K562 (cell line): ENCODE measurements at regions of chr19 and their contacts with region 1.

Region 1: DNA sequence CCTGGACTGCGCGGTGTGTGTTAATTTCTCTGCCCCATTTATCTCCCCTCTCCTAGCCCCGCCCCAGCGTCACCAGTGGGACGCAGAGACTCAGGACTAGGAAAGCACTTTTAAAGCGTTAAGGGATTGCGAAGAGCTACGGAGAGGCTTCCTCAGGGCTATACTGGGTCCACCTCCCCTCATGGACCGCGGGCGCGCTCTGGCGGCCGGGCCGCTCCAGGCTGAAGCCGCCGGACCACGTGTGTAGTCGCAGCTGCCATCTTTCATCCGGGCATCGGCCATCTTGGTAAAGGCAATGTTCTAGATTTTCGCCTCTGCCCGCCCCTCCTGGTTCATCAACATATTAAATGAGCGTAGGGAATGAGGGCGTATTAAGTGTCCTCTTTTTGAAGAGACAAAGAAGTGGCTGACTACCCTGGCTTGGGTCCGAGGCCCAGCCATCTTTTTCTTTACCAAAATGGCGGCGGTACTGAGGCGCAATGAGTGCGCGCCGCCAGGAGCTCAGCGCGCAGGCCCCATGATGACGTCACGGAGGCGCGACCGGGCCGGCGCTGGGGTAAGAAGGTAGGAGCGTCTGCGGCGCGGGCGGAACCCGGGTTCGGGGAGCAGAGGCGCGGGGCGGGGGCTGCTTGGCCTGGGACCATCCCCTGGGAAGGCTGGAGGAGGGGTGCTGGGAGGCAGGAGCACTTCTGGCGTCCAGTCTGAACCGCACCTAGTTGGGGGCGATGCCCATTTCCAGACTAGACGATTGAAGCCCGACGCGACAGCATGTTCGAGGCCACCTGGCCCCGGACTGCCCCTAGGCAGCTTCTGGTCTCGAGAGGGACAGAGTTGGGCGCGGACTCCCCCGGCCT is at the start of gene CCDC124:
- DNase-seq: peak; percentile 93 to 96 (median 96)
- ATAC-seq: peak; percentile 99
- H3K4me3 ChIP-seq: peak within 1 kb of the TSS; percentile 89
- H3K27ac ChIP-seq: peak within 1 kb of the TSS; percentile 95
- H3K4me1 ChIP-seq: peaks cover 12 to 18% of the 10 kb centered on the region in 2 experiments; a peak in 4 of 5 replicates
- H3K27me3 ChIP-seq: no peaks in the 10 kb centered on the region
- CTCF ChIP-seq: peak; percentile 95 to 99 (median 98)
- EP300 ChIP-seq: no peak; the same call in none of the 2 replicates
- POLR2A ChIP-seq: peak; percentile 91
- RAD21 ChIP-seq: peak; percentile 98 to 99
- polyA plus RNA-seq, gene CCDC124: 6.6 to 19.4 TPM

Region 2: DNA sequence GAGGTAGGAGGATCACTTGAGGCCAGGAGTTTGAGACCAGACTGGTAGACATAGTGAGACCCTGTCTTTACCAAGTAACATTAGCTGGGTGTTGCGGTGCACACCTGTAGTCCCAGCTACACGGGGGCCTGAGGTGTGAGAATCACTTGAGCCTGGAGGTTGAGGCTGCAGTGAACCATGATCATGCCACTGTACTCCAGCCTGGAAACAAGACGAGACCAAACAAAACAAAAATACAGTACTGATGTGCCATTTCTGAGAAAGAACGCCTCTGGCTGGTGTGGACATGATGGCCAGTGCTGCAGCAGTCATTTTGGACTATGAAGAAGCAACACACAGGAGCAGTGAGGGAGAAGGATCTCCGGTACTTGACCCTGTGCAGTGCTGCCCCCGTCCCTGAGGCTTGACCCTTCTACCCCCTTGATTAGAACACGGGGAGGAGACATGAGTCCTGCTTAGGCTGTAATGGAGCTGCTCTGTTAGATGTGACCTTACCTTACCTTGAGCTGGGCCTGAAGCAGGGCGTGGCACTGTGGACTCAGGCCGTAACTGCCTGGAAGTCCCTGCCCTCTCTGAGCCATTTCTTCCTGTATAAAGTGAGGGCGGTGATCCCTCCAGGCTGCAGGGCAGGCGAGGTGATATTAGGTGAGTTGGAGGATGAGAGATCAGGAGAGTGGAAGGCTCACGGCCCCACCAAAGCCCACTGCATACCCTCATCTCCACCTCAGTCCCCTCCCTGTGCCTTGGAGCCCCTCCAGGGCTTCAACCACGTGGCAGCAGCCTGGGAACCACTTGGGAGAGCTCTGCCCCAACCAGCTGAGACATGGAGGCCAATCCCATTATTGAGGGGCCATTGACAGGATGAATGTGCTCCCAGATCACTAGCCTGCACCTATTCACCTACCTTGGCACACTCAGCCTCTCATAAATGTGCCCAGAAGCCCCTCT is 67.1 kb before region 1 on chr19:
- CTCF ChIA-PET with region 1: interaction called, 31 read pairs
- POLR2A ChIA-PET with region 1: interaction called, 51 read pairs
- in situ Hi-C with region 1: loop called (anchors 5 kb)
- intact Hi-C with region 1: loop called (anchors 1 kb)
- DNase-seq: peak; percentile 37 to 86 (median 58)
- ATAC-seq: peak; percentile 81
- H3K4me3 ChIP-seq: no peak overlapping the region
- H3K27ac ChIP-seq: peak overlapping the region; percentile 55
- H3K4me1 ChIP-seq: peaks cover 18 to 55% of the 10 kb centered on the region in 2 experiments; a peak in 4 of 5 replicates
- H3K27me3 ChIP-seq: no peaks in the 10 kb centered on the region
- CTCF ChIP-seq: no peak
- EP300 ChIP-seq: no peak
- POLR2A ChIP-seq: peak; percentile 72
- RAD21 ChIP-seq: no peak

Region 3: DNA sequence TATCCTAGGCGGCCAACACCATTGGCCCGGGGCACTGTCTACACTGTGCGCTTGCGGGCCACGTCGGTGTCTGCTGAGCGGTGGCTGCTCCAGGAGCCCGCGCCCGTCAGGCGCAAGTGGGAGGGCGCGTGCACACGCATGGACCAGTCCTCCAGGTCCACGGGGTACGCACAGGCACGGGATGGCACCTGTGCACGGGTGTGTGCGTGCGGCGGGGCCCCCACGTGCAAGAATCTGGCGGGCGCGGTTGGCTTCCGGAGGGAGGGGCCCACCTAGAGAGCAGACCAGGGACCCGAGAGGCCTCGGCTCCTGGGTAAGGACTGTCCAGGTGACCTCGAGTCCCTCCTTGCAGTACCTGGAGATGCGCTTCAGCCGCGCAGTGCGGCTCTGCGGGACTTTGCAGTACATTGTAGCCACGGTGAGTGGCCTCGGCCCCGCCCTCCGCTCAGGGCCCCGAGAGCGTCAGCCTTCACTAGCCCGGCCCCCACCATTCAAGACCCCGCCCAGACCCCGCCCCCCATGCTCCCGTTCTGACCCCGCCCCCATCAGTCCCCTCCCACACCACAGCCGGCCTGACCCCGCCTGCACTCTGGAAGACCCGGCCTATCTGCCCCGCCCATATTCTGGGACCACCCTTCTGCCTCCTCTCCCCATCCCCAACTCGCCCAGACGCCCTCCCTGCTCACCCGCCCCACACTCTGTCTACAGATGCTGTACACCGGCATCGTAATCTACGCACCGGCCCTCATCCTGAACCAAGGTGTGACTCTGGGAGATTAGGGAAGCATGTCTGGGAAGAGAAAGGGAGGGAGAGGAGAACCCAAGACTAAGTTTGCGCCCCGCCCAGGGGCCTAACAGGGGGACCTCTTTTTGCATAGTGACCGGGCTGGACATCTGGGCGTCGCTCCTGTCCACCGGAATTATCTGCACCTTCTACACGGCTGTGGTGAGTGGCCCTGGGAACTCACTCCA is 58.6 kb before region 1 on chr19:
- CTCF ChIA-PET with region 1: interaction called, 31 read pairs
- POLR2A ChIA-PET with region 1: interaction called, 20 read pairs
- in situ Hi-C with region 1: loop called (anchors 5 kb)
- intact Hi-C with region 1: loop called (anchors 1 kb)
- DNase-seq: peak; percentile 87 to 98 (median 96)
- ATAC-seq: peak; percentile 96
- H3K4me3 ChIP-seq: peak overlapping the region; percentile 43
- H3K27ac ChIP-seq: no peak overlapping the region
- H3K4me1 ChIP-seq: peaks cover 0 to 42% of the 10 kb centered on the region in 2 experiments; a peak in 3 of 5 replicates
- H3K27me3 ChIP-seq: peaks cover 9 to 17% of the 10 kb centered on the region in 2 experiments; a peak in 3 of 5 replicates
- CTCF ChIP-seq: no peak
- EP300 ChIP-seq: no peak
- POLR2A ChIP-seq: no peak
- RAD21 ChIP-seq: no peak

Region 4: GRCh38 chr19:17947815-17948513 is 15.3 kb after region 1 on chr19:
- CTCF ChIA-PET with region 1: no interaction called
- POLR2A ChIA-PET with region 1: interaction called, 21 read pairs
- in situ Hi-C with region 1: no loop called
- intact Hi-C with region 1: no loop called
- DNase-seq: peak; percentile 96 to 99 (median 96)
- ATAC-seq: peak; percentile 68
- H3K4me3 ChIP-seq: peak overlapping the region; percentile 51
- H3K27ac ChIP-seq: peak overlapping the region; percentile 31; the same call in 1 of the 3 replicates
- H3K4me1 ChIP-seq: peaks cover 58 to 80% of the 10 kb centered on the region in 2 experiments
- H3K27me3 ChIP-seq: no peaks in the 10 kb centered on the region
- CTCF ChIP-seq: no peak
- EP300 ChIP-seq: no peak
- POLR2A ChIP-seq: no peak
- RAD21 ChIP-seq: no peak

Region 5: GRCh38 chr19:18274781-18275356 is 342.2 kb after region 1 on chr19:
- CTCF ChIA-PET with region 1: no interaction called
- POLR2A ChIA-PET with region 1: no interaction called
- in situ Hi-C with region 1: no loop called
- intact Hi-C with region 1: no loop called
- DNase-seq: peak; percentile 53 to 87 (median 65)
- ATAC-seq: peak; percentile 83
- H3K4me3 ChIP-seq: no peak overlapping the region
- H3K27ac ChIP-seq: peak overlapping the region; percentile 24; the same call in 2 of the 3 replicates
- H3K4me1 ChIP-seq: peaks cover 20 to 56% of the 10 kb centered on the region in 2 experiments
- H3K27me3 ChIP-seq: no peaks in the 10 kb centered on the region
- CTCF ChIP-seq: no peak
- EP300 ChIP-seq: peak; percentile 7; the same call in 1 of the 2 replicates
- POLR2A ChIP-seq: peak; percentile 77; the same call in 1 of the 2 replicates
- RAD21 ChIP-seq: 0 out of 4 replicates have a peak, but pooled peaks of 1 of the 2 experiments have one; percentile 2